ENCODE measurements at regions of chr2 and their contacts with region 1.

Region 1: DNA sequence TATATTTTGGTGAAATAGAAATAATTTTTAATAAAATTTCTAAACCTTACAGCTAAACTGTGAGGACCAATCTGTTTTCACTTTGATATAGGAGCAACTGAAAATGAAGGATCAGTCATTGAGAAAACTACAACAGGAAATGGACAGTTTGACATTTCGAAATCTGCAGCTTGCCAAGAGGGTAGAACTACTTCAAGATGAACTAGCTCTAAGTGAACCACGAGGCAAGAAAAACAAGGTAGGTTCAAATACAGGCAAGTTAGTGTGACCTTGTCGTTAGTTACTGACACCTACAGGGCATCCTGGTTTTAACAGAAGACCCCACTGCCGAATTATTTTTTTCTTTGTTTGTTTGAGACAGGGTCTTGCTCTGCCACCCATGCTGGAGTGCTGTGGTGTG is 75.5 kb upstream of the STON1 start:
- DNase-seq: no peak
- ATAC-seq: no peak
- H3K4me3 ChIP-seq: no peak overlapping the region
- H3K4me3 Mint-ChIP-seq: no peak overlapping the region
- H3K27ac ChIP-seq: no peak overlapping the region
- H3K27ac Mint-ChIP-seq: no peak overlapping the region
- H3K4me1 ChIP-seq: peaks cover 5 to 16% of the 10 kb centered on the region in 2 experiments
- H3K4me1 Mint-ChIP-seq: peaks cover 18 to 28% (median 25%) of the 10 kb centered on the region in 3 donors
- H3K27me3 ChIP-seq: no peaks in the 10 kb centered on the region
- H3K27me3 Mint-ChIP-seq: no peaks in the 10 kb centered on the region

Region 2: GRCh38 chr2:47479863-47480262 is 974.6 kb before region 1 on chr2:
- CTCF ChIA-PET with region 1: interaction called in 1 of 2 experiments, 10 read pairs
- POLR2A ChIA-PET with region 1: no interaction called
- DNase-seq: no peak
- ATAC-seq: no peak
- H3K4me3 ChIP-seq: no peak overlapping the region
- H3K4me3 Mint-ChIP-seq: no peak overlapping the region
- H3K27ac ChIP-seq: no peak overlapping the region
- H3K27ac Mint-ChIP-seq: no peak overlapping the region
- H3K4me1 ChIP-seq: no peaks in the 10 kb centered on the region
- H3K4me1 Mint-ChIP-seq: no peaks in the 10 kb centered on the region
- H3K27me3 ChIP-seq: no peaks in the 10 kb centered on the region
- H3K27me3 Mint-ChIP-seq: no peaks in the 10 kb centered on the region

Region 3: DNA sequence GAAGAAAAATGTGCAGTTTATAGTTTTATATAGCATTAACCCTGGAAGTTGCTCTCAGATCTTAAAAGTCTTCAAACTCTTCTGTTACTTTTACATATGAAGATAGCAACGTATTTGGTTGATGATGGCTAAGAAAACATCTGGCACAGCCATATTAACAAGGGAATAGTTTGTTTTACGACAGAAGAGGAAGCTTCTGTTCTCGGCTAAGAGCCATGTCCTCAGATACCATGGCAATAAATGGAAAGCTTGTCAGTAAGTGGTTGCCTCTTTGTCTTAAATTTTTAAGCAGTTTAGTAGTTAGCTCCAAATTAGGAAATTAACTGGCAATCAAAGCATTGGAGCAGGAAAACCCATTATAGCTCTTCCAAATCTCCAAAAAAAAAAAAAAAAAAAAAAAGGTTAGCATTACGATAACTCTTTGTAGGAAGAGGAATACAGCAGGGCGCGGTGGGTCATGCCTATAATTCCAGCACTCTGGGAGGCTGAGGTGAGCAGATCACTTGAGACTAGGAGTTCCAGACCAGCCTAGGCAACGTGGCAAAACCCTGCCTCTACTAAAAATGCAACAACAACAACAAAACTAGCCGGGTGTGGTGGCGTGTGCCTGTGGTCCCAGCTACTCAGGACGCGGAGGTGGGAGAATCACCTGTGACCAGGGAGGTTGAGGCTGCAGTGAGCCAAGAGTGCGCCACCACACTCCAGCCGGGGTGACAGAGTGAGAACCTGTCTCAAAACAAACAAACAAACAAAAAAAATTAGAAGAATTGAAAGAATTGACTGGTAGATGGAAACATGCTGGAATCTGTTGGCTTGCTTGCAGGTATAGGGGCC is 71.0 kb after region 1 on chr2:
- CTCF ChIA-PET with region 1: no interaction called
- POLR2A ChIA-PET with region 1: interaction called in 1 of 2 experiments, 11 read pairs
- DNase-seq: no peak
- ATAC-seq: no peak
- H3K4me3 ChIP-seq: no peak overlapping the region
- H3K4me3 Mint-ChIP-seq: no peak overlapping the region
- H3K27ac ChIP-seq: no peak overlapping the region
- H3K27ac Mint-ChIP-seq: no peak overlapping the region
- H3K4me1 ChIP-seq: peaks cover 0 to 11% of the 10 kb centered on the region in 2 experiments
- H3K4me1 Mint-ChIP-seq: peaks cover 9 to 16% (median 10%) of the 10 kb centered on the region in 3 donors
- H3K27me3 ChIP-seq: peaks cover 0 to 9% of the 10 kb centered on the region in 2 experiments
- H3K27me3 Mint-ChIP-seq: no peaks in the 10 kb centered on the region

Region 4: GRCh38 chr2:48799601-48800000 is 345.1 kb after region 1 on chr2:
- CTCF ChIA-PET with region 1: no interaction called
- POLR2A ChIA-PET with region 1: no interaction called
- DNase-seq: no peak
- ATAC-seq: no peak
- H3K4me3 ChIP-seq: no peak overlapping the region
- H3K4me3 Mint-ChIP-seq: no peak overlapping the region
- H3K27ac ChIP-seq: no peak overlapping the region
- H3K27ac Mint-ChIP-seq: no peak overlapping the region
- H3K4me1 ChIP-seq: no peaks in the 10 kb centered on the region
- H3K4me1 Mint-ChIP-seq: no peaks in the 10 kb centered on the region
- H3K27me3 ChIP-seq: peaks cover 0 to 3% of the 10 kb centered on the region in 2 experiments
- H3K27me3 Mint-ChIP-seq: peaks cover 1 to 12% of the 10 kb centered on the region in 2 donors